A549 (cell line): ENCODE measurements at regions of chr6 and their contacts with region 1.

Region 1: GRCh38 chr6:26521600-26522391 is 16.4 kb upstream of the HMGN4 start:
- DNase-seq: peak; percentile 71 to 90
- ATAC-seq: peak; percentile 93 to 96
- H3K4me3 ChIP-seq: peak overlapping the region; percentile 48
- H3K27ac ChIP-seq: peak overlapping the region; percentile 99
- H3K4me1 ChIP-seq: peaks cover 28% of the 10 kb centered on the region
- CTCF ChIP-seq: peak; percentile 46; the same call in 2 of the 3 replicates
- EP300 ChIP-seq: no peak
- POLR2A ChIP-seq: peak; percentile 61
- RAD21 ChIP-seq: peak; percentile 22 to 46; a peak in 3 of 5 replicates

Region 2: GRCh38 chr6:26532699-26533531 is 11.1 kb after region 1 on chr6:
- CTCF ChIA-PET with region 1: interaction called, 9 read pairs
- POLR2A ChIA-PET with region 1: interaction called, 11 read pairs
- DNase-seq: peak in 1 of 2 experiments; percentile 91
- ATAC-seq: peak; percentile 46 to 56
- H3K4me3 ChIP-seq: peak overlapping the region; percentile 63
- H3K27ac ChIP-seq: peak overlapping the region; percentile 91 to 100
- H3K4me1 ChIP-seq: peaks cover 36% of the 10 kb centered on the region
- CTCF ChIP-seq: no peak
- EP300 ChIP-seq: no peak
- POLR2A ChIP-seq: no peak
- RAD21 ChIP-seq: 0 out of 5 replicates have a peak, but pooled peaks of 1 of the 2 experiments have one; percentile 2